ENCODE measurements at regions of chr9 and their contacts with region 1.

Region 1: DNA sequence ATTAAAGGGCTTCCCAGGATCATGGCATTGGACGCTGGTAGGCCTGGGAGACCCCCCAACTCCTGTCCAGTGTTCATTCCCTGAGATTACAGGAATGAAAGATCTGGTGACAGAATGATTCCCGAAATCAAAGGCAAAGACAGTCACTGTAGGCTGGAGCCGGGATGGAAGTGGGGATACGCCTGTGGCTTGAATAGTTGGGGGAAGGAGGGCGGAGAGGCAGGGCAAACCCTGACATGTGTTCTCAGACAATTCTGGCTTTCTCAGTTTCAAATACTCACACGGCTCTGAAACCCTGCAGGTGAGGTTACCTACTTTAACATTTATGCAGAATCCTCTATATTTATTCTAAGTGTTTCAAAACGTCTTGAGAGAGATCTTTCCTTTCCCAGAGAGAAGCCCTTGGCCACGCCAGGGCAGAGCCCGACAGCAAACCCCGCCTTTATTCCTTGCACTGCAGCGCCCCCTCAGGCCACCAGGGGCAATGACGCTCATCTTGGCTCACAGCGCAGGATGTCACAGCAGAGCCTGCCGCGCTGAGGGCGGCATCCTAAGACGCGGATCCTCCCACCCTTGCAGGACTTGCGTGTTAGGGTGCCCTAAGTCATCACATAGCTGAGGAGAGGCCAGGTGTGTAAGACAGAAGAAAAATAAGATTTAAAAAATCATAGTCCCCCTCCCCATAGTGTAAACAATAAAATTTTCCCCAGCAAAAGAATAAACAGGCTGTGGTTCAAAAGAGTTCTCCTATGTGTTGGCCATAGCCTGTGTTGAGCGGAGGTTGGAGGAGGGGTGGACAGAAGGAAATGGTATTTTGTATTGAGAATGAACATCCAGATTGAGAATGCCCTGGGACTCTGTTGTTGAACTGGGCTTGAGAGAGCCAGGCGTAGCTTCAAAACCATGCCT is 284.5 kb downstream of the NTRK2 start:
- DNase-seq: peak; percentile 78 to 82
- ATAC-seq: peak; percentile 93 to 97 (median 96)
- H3K4me3 ChIP-seq: no peak overlapping the region
- H3K27ac ChIP-seq: no peak overlapping the region
- H3K4me1 ChIP-seq: peaks cover 0 to 32% (median 5%) of the 10 kb centered on the region in 9 donors
- H3K27me3 ChIP-seq: no peaks in the 10 kb centered on the region
- CTCF ChIP-seq: peak; percentile 86 to 97 (median 96)

Region 2: DNA sequence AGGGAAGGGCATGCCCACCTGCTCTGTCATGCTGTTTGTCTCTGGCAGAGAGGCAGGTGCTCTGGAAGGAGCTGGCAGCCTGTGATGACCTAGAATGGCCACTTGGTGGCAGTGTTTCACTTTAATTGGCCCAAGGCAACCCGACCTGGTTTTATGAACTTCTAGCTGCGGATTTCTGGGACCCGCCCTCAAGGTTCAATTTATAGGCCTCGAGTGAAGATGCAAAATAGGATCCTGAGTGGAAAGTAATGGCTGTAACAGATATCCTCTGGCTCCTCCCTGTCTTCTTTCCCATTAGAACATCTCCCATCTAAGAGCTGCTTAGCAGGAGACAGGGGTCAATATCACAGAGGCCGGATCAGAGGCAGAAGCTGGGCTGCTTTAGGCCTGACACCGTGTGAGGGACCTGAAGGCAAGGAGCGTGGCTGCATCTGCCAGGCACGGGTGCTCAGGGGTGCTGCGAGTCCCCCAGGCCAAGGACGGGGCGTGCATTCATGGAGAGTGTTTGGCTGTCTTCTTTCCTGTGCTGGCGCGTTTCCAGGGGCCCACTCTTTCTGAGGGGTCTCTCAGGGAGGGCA is 556.8 kb before region 1 on chr9:
- intact Hi-C with region 1: loop called in 9 of 10 experiments (anchors 2 to 10 kb)
- DNase-seq: peak; percentile 31 to 53
- ATAC-seq: peak; percentile 71 to 85 (median 76)
- H3K4me3 ChIP-seq: no peak overlapping the region
- H3K27ac ChIP-seq: no peak overlapping the region
- H3K4me1 ChIP-seq: peaks cover 0 to 8% (median 0%) of the 10 kb centered on the region in 9 donors
- H3K27me3 ChIP-seq: peaks cover 0 to 32% (median 10%) of the 10 kb centered on the region in 7 donors
- CTCF ChIP-seq: peak; percentile 82 to 98 (median 96)

Region 3: GRCh38 chr9:84668196-84669012 is 285.6 kb before region 1 on chr9:
- intact Hi-C with region 1: loop called in 3 of 10 experiments (anchors 1 to 10 kb)
- DNase-seq: peak; percentile 51 to 69
- ATAC-seq: peak; percentile 83 to 94 (median 90)
- H3K4me3 ChIP-seq: peak overlapping the region; percentile 29 to 62 (median 56)
- H3K27ac ChIP-seq: peak overlapping the region in 3 of 10 donors; percentile 9 to 30 (median 23)
- H3K4me1 ChIP-seq: peaks cover 5 to 34% (median 26%) of the 10 kb centered on the region in 9 donors
- H3K27me3 ChIP-seq: peaks cover 3 to 63% (median 29%) of the 10 kb centered on the region in 7 donors
- CTCF ChIP-seq: peak; percentile 38 to 76 (median 60)

Region 4: GRCh38 chr9:84711902-84712301 is 242.1 kb before region 1 on chr9:
- intact Hi-C with region 1: loop called in 1 of 10 experiments (anchors 5 kb)
- DNase-seq: peak in 1 of 2 donors; percentile 14
- ATAC-seq: peak in 3 of 8 donors; percentile 24 to 55 (median 28)
- H3K4me3 ChIP-seq: no peak overlapping the region
- H3K27ac ChIP-seq: no peak overlapping the region
- H3K4me1 ChIP-seq: peaks cover 0 to 9% (median 3%) of the 10 kb centered on the region in 9 donors
- H3K27me3 ChIP-seq: no peaks in the 10 kb centered on the region
- CTCF ChIP-seq: no peak

Region 5: GRCh38 chr9:84804951-84805694 is 148.9 kb before region 1 on chr9:
- intact Hi-C with region 1: loop called in 1 of 10 experiments (anchors 10 kb)
- DNase-seq: no peak
- ATAC-seq: peak in 2 of 8 donors; percentile 38 to 56
- H3K4me3 ChIP-seq: peak overlapping the region in 2 of 10 donors; percentile 11 to 22
- H3K27ac ChIP-seq: peak overlapping the region in 4 of 10 donors; percentile 16 to 32 (median 23)
- H3K4me1 ChIP-seq: peaks cover 0 to 4% (median 0%) of the 10 kb centered on the region in 9 donors
- H3K27me3 ChIP-seq: no peaks in the 10 kb centered on the region
- CTCF ChIP-seq: no peak

Region 6: GRCh38 chr9:85600675-85601263 is 646.7 kb after region 1 on chr9:
- intact Hi-C with region 1: loop called in 1 of 10 experiments (anchors 10 kb)
- DNase-seq: no peak
- ATAC-seq: peak; percentile 17 to 79 (median 72)
- H3K4me3 ChIP-seq: no peak overlapping the region
- H3K27ac ChIP-seq: peak overlapping the region in 1 of 10 donors; percentile 29
- H3K4me1 ChIP-seq: peaks cover 0 to 17% (median 10%) of the 10 kb centered on the region in 9 donors
- H3K27me3 ChIP-seq: no peaks in the 10 kb centered on the region
- CTCF ChIP-seq: no peak